Right cardiac atrium (tissue), 5 donors: ENCODE measurements at regions of chr10 and their contacts with region 1.

Region 1: GRCh38 chr10:51083356-51083853 is 9.1 kb downstream of the PRKG1 start:
- DNase-seq: no peak
- ATAC-seq: peak; percentile 20 to 36
- H3K4me3 ChIP-seq: no peak overlapping the region
- H3K27ac ChIP-seq: no peak overlapping the region
- H3K4me1 ChIP-seq: peaks cover 6% of the 10 kb centered on the region
- H3K27me3 ChIP-seq: no peaks in the 10 kb centered on the region

Region 2: GRCh38 chr10:51214207-51215196 is 131.1 kb after region 1 on chr10:
- intact Hi-C with region 1: loop called in 1 of 4 experiments (anchors 10 kb)
- DNase-seq: peak in 1 of 3 donors; percentile 45
- ATAC-seq: peak in 1 of 2 donors; percentile 34
- H3K4me3 ChIP-seq: no peak overlapping the region
- H3K27ac ChIP-seq: no peak overlapping the region
- H3K4me1 ChIP-seq: no peaks in the 10 kb centered on the region
- H3K27me3 ChIP-seq: no peaks in the 10 kb centered on the region

Region 3: DNA sequence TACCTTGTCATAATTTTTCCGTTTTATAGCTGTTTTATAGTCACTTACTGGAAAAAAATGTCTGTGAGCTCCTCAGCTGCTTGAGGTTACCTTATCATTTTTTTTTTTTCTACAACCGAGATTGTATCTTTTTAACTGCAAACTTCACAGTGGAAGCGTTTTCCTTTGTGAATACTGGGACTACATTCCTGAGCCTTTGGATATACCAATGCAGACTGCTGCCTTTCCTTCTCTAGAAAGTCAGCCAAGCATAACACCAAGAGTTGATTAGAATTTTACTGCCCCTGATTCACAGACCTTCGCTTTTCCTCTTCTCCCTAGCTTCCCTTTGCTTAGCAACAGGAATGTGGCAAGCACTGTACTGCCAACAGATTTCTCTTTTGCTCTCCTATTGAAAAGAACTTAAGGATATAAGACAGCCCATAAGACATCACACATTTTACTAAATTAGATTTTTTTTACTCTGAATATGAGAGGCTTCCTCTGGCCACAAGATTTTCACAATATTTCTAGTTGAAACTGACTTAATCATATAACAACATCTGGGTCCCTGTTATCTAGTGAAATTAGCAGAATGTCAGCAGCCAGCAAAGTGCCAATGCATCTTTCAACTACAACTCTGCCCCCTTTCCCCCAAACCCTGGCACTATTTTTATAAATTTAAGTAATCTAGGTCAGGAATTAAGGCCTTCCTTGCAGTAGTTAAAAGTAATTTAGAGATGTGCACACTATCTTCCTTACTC is 161.5 kb after region 1 on chr10:
- intact Hi-C with region 1: loop called in 1 of 4 experiments (anchors 10 kb)
- DNase-seq: peak in 2 of 3 donors; percentile 12 to 31
- ATAC-seq: peak; percentile 96 to 97
- H3K4me3 ChIP-seq: no peak overlapping the region
- H3K27ac ChIP-seq: no peak overlapping the region
- H3K4me1 ChIP-seq: peaks cover 1% of the 10 kb centered on the region
- H3K27me3 ChIP-seq: no peaks in the 10 kb centered on the region